Motor neuron (in vitro differentiated cells): ENCODE measurements at regions of chr11 and their contacts with region 1.

Region 1: GRCh38 chr11:20647976-20648565 is 21.3 kb upstream of the NELL1 start:
- ATAC-seq: peak; percentile 50 to 69 (median 60)
- H3K4me3 ChIP-seq: no peak overlapping the region
- H3K27ac ChIP-seq: no peak overlapping the region
- H3K4me1 ChIP-seq: peaks cover 2 to 27% of the 10 kb centered on the region in 2 donors

Region 2: DNA sequence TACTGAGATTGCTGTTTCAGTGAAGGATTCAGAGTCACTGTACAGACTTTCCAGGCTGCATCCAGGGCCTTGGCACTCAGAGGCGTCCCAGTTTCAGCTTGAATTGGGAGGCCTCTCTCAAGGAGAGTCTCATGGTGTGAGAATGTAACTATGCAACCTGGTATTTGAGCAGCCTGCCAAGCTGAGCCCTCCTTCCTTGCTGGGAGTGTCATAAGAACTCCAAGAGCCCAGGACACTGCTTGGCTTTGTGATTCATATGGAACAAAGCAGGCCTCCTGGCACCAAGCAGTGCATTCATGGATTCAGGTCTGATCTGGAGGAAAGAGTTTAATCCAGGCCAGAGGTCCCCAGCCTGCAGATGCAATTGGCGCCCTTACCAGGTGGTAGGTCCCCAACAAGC is 659.5 kb before region 1 on chr11:
- in situ Hi-C with region 1: no loop called
- ATAC-seq: peak in 6 of 8 experiments; percentile 27 to 98 (median 74)
- H3K4me3 ChIP-seq: no peak overlapping the region
- H3K27ac ChIP-seq: no peak overlapping the region
- H3K4me1 ChIP-seq: no peaks in the 10 kb centered on the region

Region 3: GRCh38 chr11:22130462-22131053 is 1482.5 kb after region 1 on chr11:
- in situ Hi-C with region 1: loop called in 5 of 9 experiments (anchors 25 kb)
- ATAC-seq: peak in 7 of 8 experiments; percentile 40 to 75 (median 55)
- H3K4me3 ChIP-seq: no peak overlapping the region
- H3K27ac ChIP-seq: no peak overlapping the region
- H3K4me1 ChIP-seq: no peaks in the 10 kb centered on the region

Region 4: DNA sequence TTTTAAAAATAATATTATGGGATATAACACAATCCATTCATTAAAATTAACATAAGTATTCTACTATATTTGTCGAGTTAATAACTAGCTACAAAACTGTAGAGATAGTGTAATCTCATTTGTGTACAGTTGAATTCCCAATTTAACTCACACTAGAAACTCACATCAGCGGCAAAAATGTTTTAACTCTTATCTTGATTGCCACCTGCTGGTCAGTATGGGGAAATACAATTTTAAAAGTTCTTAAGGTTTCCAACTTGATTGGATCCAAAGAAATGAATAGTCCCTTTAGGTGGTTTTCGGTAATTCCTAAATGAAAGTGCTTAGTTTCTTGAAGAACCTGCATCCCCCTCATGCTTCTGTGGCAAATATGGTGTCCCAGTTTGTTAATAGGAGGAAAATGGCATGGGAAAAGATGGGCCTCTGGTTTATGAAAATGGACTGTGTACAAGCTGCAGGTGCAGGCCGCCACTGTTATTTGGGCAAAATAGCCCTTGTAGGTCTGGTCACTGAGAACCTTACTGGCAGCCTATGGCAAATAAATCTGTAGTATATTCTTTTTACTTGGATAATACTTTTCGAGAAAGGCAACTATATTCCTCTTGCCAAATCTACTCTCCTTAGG is 1656.4 kb after region 1 on chr11:
- in situ Hi-C with region 1: loop called in 1 of 9 experiments (anchors 25 kb)
- ATAC-seq: peak in 1 of 8 experiments; percentile 26
- H3K4me3 ChIP-seq: no peak overlapping the region
- H3K27ac ChIP-seq: no peak overlapping the region
- H3K4me1 ChIP-seq: no peaks in the 10 kb centered on the region